ENCODE measurements at regions of chr10 and their contacts with region 1.

Region 1: GRCh38 chr10:78029269-78030226 is at the start of gene POLR3A:
- ATAC-seq: peak; percentile 61 to 74 (median 68)
- H3K4me3 ChIP-seq: peak within 1 kb of the TSS; percentile 79 to 98 (median 85)
- H3K27ac ChIP-seq: peak within 1 kb of the TSS; percentile 59 to 92
- H3K4me1 ChIP-seq: peaks cover 6 to 7% of the 10 kb centered on the region in 2 donors
- total RNA-seq, gene POLR3A: 17.4 to 31.2 (median 24.1) TPM

Region 2: GRCh38 chr10:78196964-78197363 is 167.4 kb after region 1 on chr10:
- in situ Hi-C with region 1: no loop called
- ATAC-seq: peak; percentile 28 to 96 (median 46)
- H3K4me3 ChIP-seq: no peak overlapping the region
- H3K27ac ChIP-seq: no peak overlapping the region
- H3K4me1 ChIP-seq: peaks cover 14 to 15% of the 10 kb centered on the region in 2 donors

Region 3: GRCh38 chr10:78470267-78471103 is 440.9 kb after region 1 on chr10:
- in situ Hi-C with region 1: no loop called
- ATAC-seq: no peak
- H3K4me3 ChIP-seq: no peak overlapping the region
- H3K27ac ChIP-seq: no peak overlapping the region
- H3K4me1 ChIP-seq: peaks cover 32 to 36% of the 10 kb centered on the region in 2 donors

Region 4: DNA sequence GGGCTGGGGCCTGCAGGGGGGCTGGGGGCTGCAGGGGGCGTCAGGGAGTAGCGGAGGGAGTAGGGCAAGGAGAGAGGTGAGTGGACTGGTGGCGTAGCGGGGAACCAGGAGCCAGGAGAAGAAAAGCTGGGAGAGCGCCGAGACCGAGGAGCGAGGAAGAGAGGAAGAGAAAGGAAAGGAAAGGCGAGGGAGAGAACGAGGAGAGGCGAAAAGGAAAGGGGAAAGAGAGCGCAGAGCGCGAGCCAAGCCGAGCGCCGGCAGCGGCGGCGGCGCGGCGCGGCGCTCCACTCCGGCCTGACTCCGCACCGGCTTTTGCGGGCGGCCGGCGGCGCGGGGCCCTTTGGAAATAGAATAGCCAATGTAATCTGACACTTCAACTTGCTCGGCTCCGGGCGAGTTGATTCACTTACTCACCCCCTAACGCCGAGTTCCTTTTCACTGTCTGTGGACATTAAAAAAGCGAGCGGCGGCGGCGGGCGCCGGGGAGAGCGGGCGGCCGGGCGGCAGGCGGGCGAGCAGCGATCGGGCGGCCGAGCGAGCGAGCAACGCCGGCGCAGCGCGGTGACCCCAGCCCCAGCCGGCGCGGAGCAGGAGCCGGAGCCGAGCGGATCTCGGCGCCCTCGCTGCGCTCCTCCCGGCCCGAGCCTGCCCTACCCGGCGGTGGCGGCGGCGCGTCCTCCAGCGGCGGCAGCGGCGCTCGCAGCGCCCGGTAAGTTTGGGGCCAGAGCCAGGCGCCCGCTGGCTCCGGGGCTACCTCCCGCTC is 1039.2 kb after region 1 on chr10 and contains the start of gene ZMIZ1:
- in situ Hi-C with region 1: loop called in 1 of 9 experiments (anchors 25 kb)
- ATAC-seq: peak; percentile 20 to 62 (median 36)
- H3K4me3 ChIP-seq: peak within 1 kb of the TSS; percentile 59 to 88 (median 69)
- H3K27ac ChIP-seq: peak within 1 kb of the TSS; percentile 79 to 87
- H3K4me1 ChIP-seq: peaks cover 32 to 34% of the 10 kb centered on the region in 2 donors
- total RNA-seq, gene ZMIZ1: 15.8 to 79.9 (median 50.0) TPM

Region 5: DNA sequence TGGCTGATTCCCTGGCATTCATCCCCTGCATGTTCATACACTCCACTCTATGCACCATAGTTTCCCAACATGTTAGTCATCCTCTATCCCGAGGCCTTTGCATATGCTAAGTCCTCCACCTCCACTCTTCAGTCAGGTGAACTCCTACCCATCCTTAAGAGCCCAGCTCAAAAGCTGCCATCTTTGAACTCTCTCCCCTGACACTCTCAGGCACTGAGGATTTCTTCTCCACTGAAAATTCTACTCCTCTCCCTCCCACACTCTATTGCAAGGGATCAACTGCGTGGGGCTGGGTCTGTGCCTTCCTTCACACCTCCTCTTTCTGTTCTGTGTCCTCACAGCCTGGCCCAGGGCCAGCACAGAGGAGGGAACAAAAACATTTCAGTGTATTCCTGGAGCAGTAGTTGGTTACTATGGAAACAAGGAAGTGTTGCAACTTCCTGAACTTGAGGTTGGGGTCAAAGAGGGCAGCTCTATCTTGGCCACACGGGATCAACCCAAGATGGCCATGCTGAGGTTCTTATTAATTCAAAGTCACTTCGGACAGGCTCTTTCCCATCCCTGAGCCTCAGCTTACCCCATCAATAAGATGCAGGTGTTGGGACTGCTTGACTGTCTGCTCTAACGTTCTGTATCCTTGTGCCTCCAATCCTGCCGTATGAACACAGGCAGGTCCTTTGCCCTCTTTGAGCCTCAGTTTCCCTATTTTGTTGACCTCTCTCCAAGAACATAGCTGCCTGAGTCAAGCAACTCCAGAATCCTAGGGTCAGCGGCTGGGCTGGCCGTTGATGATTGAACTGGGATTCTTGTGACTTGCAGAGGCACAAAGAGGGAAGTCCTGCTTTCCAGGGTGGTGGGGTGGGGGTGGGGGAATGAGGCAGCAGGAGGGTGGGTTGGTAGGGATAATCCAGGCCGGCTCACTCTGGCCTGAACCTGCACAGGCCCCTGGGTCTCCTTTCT is 1054.7 kb after region 1 on chr10:
- in situ Hi-C with region 1: loop called in 1 of 9 experiments (anchors 25 kb)
- ATAC-seq: peak; percentile 32 to 67 (median 44)
- H3K4me3 ChIP-seq: no peak overlapping the region
- H3K27ac ChIP-seq: no peak overlapping the region
- H3K4me1 ChIP-seq: peaks cover 65 to 79% of the 10 kb centered on the region in 2 donors

Region 6: DNA sequence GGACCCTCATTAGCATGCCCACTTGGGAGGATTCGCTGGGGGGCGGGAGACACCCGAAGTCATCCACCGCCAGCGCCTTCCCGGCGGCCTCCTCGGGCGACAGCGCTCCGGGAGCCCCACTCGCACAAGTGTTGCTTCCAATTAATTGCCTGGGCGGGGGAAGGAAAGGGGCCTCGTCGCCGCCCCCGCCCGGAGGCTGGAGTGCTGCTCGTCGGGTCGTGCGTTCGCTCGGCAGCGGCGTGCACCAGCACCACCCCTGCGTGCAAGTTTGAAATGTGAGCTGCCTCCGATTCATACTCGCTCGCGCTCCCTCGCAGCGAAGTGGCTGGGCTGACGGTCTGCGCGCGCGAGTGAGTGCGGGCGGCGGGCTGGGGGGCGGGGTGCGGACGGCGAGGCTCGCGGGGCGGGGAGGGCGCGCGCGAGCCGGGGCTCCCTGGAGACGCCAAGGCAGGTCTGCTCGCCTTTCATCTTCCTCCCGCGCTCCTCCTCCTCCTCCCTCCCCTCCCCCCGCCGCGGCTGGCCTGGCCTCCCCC is 1213.1 kb after region 1 on chr10:
- in situ Hi-C with region 1: loop called in 1 of 9 experiments (anchors 25 kb)
- ATAC-seq: peak; percentile 43 to 85 (median 51)
- H3K4me3 ChIP-seq: peak overlapping the region; percentile 48 to 80 (median 70)
- H3K27ac ChIP-seq: peak overlapping the region; percentile 95 to 98
- H3K4me1 ChIP-seq: peaks cover 79 to 83% of the 10 kb centered on the region in 2 donors

Measured in motor neuron (in vitro differentiated cells).